ENCODE measurements at regions of chr17 and their contacts with region 1.

Region 1: GRCh38 chr17:7823581-7824397 is 10.2 kb upstream of the KDM6B start:
- DNase-seq: no peak
- H3K4me3 ChIP-seq: no peak overlapping the region
- H3K4me3 Mint-ChIP-seq: no peak overlapping the region
- H3K27ac ChIP-seq: no peak overlapping the region
- H3K27ac Mint-ChIP-seq: peak overlapping the region in 1 of 7 donors; percentile 32
- H3K4me1 ChIP-seq: no peaks in the 10 kb centered on the region
- H3K4me1 Mint-ChIP-seq: peaks cover 6% of the 10 kb centered on the region
- H3K27me3 ChIP-seq: no peaks in the 10 kb centered on the region
- H3K27me3 Mint-ChIP-seq: peaks cover 7 to 14% (median 13%) of the 10 kb centered on the region in 3 donors
- CTCF ChIP-seq: no peak

Region 2: DNA sequence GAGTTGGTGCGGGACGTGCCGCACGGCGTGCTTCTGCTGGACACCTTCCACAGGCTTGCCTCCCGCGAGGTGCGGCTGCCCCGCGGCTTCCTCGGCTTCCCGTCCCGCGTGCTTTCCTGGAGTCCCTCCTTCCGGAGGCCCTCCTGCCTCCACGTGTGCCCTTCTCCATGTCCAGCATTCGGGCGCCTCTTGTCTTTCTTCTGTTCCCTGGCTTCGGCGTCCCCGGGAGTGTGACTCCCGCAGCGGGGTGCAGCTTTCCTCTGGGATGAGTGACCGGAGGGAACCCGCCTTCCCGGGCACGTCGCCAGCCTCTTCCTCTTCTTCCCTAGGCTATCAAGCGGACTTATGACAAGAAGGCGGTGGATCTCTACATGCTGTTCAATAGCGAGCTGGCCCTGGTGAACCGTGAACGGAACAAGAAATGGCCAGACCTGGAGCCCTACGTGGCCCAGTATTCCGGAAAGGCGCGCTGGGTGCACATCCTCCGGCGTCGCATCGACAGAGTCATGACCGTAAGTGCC is 83.2 kb before region 1 on chr17:
- intact Hi-C with region 1: loop called in 1 of 2 experiments (anchors 5 kb)
- DNase-seq: no peak
- H3K4me3 ChIP-seq: no peak overlapping the region
- H3K4me3 Mint-ChIP-seq: peak overlapping the region; percentile 37 to 80
- H3K27ac ChIP-seq: no peak overlapping the region
- H3K27ac Mint-ChIP-seq: no peak overlapping the region
- H3K4me1 ChIP-seq: peaks cover 0 to 2% of the 10 kb centered on the region in 2 donors
- H3K4me1 Mint-ChIP-seq: peaks cover 6% of the 10 kb centered on the region
- H3K27me3 ChIP-seq: no peaks in the 10 kb centered on the region
- H3K27me3 Mint-ChIP-seq: peaks cover 8 to 10% (median 9%) of the 10 kb centered on the region in 3 donors
- CTCF ChIP-seq: no peak

Region 3: GRCh38 chr17:7851438-7852256 is 27.9 kb after region 1 on chr17:
- intact Hi-C with region 1: loop called (anchors 2 kb)
- DNase-seq: peak; percentile 89 to 92 (median 90)
- H3K4me3 ChIP-seq: peak overlapping the region in 1 of 3 experiments; percentile 34
- H3K4me3 Mint-ChIP-seq: peak overlapping the region in 1 of 2 donors; percentile 45
- H3K27ac ChIP-seq: peak overlapping the region; percentile 9 to 33
- H3K27ac Mint-ChIP-seq: peak overlapping the region in 5 of 7 donors; percentile 72 to 89 (median 78)
- H3K4me1 ChIP-seq: peaks cover 32 to 39% of the 10 kb centered on the region in 2 donors
- H3K4me1 Mint-ChIP-seq: peaks cover 15% of the 10 kb centered on the region
- H3K27me3 ChIP-seq: no peaks in the 10 kb centered on the region
- H3K27me3 Mint-ChIP-seq: peaks cover 0 to 6% (median 2%) of the 10 kb centered on the region in 3 donors
- CTCF ChIP-seq: peak; percentile 97

Region 4: DNA sequence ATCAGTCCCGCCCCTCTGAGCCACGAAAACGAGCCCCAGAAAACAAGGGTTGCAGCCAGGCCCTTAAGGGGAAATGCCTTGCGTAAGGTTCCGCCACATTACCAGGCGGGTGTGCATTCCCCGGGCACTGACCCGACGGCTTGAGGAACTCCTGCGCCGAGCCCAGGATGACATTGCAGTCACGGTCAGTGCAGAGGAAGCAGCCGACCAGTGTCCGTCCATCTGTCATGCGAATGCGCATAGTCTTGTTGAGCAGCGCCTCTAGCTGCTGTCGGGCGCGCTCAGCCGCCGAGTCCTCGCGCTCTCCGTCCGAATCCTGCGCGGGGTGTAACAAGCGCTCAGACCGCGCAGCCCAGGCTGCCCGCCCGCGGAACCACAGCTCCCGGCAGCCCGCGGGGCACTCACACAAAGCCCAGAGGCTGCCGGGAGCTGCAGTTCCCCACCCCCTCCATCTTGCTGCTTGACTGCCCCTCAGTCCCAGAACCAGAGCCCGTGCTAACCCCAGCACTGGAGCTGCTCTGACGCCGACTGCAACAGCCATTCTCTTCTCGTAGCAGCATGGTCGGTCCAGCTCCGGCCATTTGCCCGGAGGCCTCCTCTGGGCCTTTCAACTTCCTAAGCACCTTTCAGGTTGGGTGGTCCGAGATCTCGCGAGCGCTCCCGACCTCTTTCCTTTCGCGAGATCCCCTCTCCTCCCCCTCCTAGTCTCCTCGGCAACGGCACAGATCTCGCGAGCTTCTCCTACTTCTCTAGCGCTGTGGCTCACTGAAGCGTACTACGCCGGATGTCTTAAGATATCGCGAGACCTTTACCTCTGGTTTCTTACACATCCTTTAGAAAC is 33.3 kb after region 1 on chr17 and contains the start of gene NAA38:
- intact Hi-C with region 1: loop called (anchors 2 kb)
- DNase-seq: peak; percentile 97 to 99 (median 98)
- H3K4me3 ChIP-seq: peak within 1 kb of the TSS; percentile 67 to 95 (median 74)
- H3K4me3 Mint-ChIP-seq: no peak within 1 kb of the TSS
- H3K27ac ChIP-seq: peak within 1 kb of the TSS; percentile 94 to 95
- H3K27ac Mint-ChIP-seq: no peak within 1 kb of the TSS
- H3K4me1 ChIP-seq: peaks cover 38 to 48% of the 10 kb centered on the region in 2 donors
- H3K4me1 Mint-ChIP-seq: no peaks in the 10 kb centered on the region
- H3K27me3 ChIP-seq: no peaks in the 10 kb centered on the region
- H3K27me3 Mint-ChIP-seq: peaks cover 0 to 4% (median 2%) of the 10 kb centered on the region in 3 donors
- CTCF ChIP-seq: no peak
- polyA plus RNA-seq, gene NAA38: 63.8 to 197 (median 148) TPM

Region 5: GRCh38 chr17:7887482-7888183 is 63.8 kb after region 1 on chr17:
- intact Hi-C with region 1: no loop called
- DNase-seq: peak; percentile 25 to 49 (median 39)
- H3K4me3 ChIP-seq: peak overlapping the region; percentile 48 to 98 (median 89)
- H3K4me3 Mint-ChIP-seq: no peak overlapping the region
- H3K27ac ChIP-seq: peak overlapping the region; percentile 79 to 82
- H3K27ac Mint-ChIP-seq: no peak overlapping the region
- H3K4me1 ChIP-seq: peaks cover 60 to 71% of the 10 kb centered on the region in 2 donors
- H3K4me1 Mint-ChIP-seq: peaks cover 13% of the 10 kb centered on the region
- H3K27me3 ChIP-seq: no peaks in the 10 kb centered on the region
- H3K27me3 Mint-ChIP-seq: peaks cover 0 to 1% (median 1%) of the 10 kb centered on the region in 3 donors
- CTCF ChIP-seq: no peak

Region 6: DNA sequence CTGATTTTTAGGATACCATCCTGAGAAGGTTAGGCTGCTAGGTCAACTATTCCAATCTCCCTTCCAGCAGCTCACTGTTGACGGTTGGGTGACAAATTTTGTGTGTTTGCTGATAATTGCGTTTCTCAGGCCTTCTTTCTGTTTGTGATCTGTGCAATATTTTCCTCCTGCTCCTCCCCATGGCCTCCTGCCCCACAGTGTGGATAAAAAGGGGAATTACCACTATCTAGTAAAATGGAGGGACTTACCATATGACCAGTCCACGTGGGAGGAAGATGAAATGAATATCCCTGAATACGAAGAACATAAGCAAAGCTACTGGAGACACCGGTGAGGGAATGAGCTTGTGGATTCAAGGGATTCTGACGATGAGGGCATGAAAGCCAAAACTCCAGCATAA is 74.0 kb after region 1 on chr17:
- intact Hi-C with region 1: loop called (anchors 5 kb)
- DNase-seq: peak; percentile 52 to 67 (median 54)
- H3K4me3 ChIP-seq: no peak overlapping the region
- H3K4me3 Mint-ChIP-seq: no peak overlapping the region
- H3K27ac ChIP-seq: peak overlapping the region in 1 of 2 donors; percentile 18
- H3K27ac Mint-ChIP-seq: peak overlapping the region in 6 of 7 donors; percentile 13 to 84 (median 54)
- H3K4me1 ChIP-seq: no peaks in the 10 kb centered on the region
- H3K4me1 Mint-ChIP-seq: peaks cover 8% of the 10 kb centered on the region
- H3K27me3 ChIP-seq: no peaks in the 10 kb centered on the region
- H3K27me3 Mint-ChIP-seq: peaks cover 0 to 3% (median 2%) of the 10 kb centered on the region in 3 donors
- CTCF ChIP-seq: peak; percentile 74